Activated CD4-positive, alpha-beta T cell treated with anti-CD3 and anti-CD28 coated beads, Interleukin-2, amount 10 ng/mL, durations not matched to agents 24 days and 14 days (primary cell): ENCODE measurements at regions of chr11 and their contacts with region 1.

Region 1: GRCh38 chr11:126310228-126310991 is 6.5 kb downstream of the DCPS start:
- DNase-seq: peak; percentile 89
- H3K4me3 Mint-ChIP-seq: no peak overlapping the region
- H3K27ac Mint-ChIP-seq: no peak overlapping the region
- H3K4me1 Mint-ChIP-seq: peaks cover 16% of the 10 kb centered on the region
- H3K27me3 Mint-ChIP-seq: no peaks in the 10 kb centered on the region

Region 2: GRCh38 chr11:126153972-126154371 is 156.4 kb before region 1 on chr11:
- intact Hi-C with region 1: no loop called
- DNase-seq: no peak
- H3K4me3 Mint-ChIP-seq: no peak overlapping the region
- H3K27ac Mint-ChIP-seq: no peak overlapping the region
- H3K4me1 Mint-ChIP-seq: no peaks in the 10 kb centered on the region
- H3K27me3 Mint-ChIP-seq: peaks cover 11% of the 10 kb centered on the region

Region 3: GRCh38 chr11:126480410-126481302 is 170.2 kb after region 1 on chr11:
- intact Hi-C with region 1: loop called (anchors 2 kb)
- DNase-seq: peak; percentile 92
- H3K4me3 Mint-ChIP-seq: peak overlapping the region; percentile 60
- H3K27ac Mint-ChIP-seq: peak overlapping the region; percentile 86
- H3K4me1 Mint-ChIP-seq: peaks cover 16% of the 10 kb centered on the region
- H3K27me3 Mint-ChIP-seq: no peaks in the 10 kb centered on the region

Region 4: GRCh38 chr11:126573325-126574076 is 263.1 kb after region 1 on chr11:
- intact Hi-C with region 1: no loop called
- DNase-seq: no peak
- H3K4me3 Mint-ChIP-seq: no peak overlapping the region
- H3K27ac Mint-ChIP-seq: no peak overlapping the region
- H3K4me1 Mint-ChIP-seq: no peaks in the 10 kb centered on the region
- H3K27me3 Mint-ChIP-seq: no peaks in the 10 kb centered on the region

Region 5: DNA sequence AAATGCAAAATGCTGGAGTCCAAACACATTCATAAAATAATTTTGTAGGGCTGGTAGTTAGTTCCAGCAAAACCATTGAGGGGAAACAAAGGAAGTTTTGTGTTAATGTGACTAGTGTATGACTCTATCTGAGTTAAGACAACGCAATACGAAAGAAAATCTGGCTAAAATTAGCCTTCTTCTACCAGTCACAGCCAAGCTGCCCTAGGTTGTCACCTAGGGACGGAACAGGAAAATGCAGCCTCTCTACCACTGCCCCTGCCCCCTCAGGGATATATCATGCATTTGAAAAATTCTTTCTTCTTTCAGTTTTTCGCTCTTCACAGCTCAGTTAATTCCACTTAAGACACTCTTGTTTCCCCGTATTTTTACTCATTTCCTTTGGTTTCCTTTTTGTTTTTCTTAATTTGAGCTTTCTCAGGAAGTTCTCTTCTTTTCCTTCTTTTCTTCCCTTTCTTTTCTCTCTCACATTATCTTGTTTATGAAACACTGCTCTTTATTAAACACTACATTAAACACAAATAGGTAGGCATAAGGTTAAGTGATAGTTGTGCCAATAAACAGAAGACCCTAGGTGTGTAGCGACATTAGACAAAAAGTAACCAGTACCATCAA is 659.6 kb after region 1 on chr11:
- intact Hi-C with region 1: loop called (anchors 10 kb)
- DNase-seq: no peak
- H3K4me3 Mint-ChIP-seq: no peak overlapping the region
- H3K27ac Mint-ChIP-seq: no peak overlapping the region
- H3K4me1 Mint-ChIP-seq: no peaks in the 10 kb centered on the region
- H3K27me3 Mint-ChIP-seq: peaks cover 17% of the 10 kb centered on the region